MCF 10A (cell line): ENCODE measurements at regions of chr4 and their contacts with region 1.

Region 1: DNA sequence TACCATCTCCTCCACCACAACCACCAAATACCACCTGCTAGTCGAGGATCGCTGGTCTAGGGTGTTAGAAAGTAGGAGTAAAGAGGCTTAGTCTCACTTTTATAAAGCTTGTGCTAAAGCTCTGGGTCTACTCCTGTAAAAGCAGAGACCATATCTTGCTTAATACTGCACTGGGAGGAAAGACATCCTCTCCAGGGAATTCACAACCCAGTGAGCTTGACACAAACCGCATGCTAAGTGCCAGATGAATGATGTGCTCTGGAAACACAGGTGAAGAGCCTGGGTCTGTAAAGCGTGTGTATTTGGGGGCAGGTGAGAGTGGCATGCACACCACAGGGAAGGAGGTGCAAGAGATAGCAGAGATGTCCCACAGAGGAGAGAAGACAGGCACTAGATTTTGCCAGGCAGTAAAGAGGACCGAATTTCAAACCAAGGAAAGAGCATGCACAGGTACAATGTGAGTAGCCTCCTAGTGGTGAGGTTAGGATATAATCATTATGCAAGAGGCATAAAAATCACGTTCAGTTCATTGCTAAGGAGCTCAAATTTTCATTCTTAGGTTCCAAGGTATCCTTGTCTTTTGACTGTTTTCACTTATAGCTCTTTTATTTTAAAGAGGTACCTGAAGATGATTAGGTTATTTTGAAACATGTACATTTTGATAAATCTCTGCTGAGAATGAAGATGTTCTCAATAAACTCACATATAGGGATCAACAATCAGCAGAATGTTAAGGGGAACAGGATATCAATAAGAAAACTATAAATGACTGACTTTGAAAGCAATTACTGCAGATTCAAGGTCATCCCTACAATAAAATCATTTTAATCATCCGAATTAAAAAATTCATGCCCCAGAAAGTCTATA is 20.7 kb downstream of the TAPT1 start:
- DNase-seq: peak; percentile 37
- H3K4me3 Mint-ChIP-seq: no peak overlapping the region
- H3K27ac Mint-ChIP-seq: no peak overlapping the region
- H3K4me1 Mint-ChIP-seq: peaks cover 6% of the 10 kb centered on the region
- H3K27me3 Mint-ChIP-seq: no peaks in the 10 kb centered on the region
- CTCF ChIP-seq: peak; percentile 49

Region 2: DNA sequence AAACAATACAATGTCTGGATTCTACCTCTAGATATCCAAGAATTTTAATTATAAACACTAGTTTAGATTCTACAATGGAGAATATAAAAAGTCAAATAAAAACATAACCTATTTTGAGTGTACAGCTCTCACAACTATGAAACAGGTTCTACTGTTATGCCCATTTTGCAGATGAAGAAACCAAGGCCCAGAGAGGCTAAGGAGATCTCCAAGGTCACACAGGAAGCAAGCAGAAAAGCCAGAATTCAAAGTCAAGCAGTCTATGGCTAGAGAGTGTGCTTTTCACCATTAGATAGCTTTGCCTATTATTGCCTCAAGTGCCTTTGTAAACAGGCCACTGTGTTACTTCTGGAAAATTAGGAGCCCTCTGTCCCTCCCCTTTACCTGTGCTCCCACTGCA is 13.4 kb after region 1 on chr4:
- CTCF ChIA-PET with region 1: interaction called, 12 read pairs
- POLR2A ChIA-PET with region 1: interaction called, 4 read pairs
- intact Hi-C with region 1: no loop called
- DNase-seq: no peak
- H3K4me3 Mint-ChIP-seq: no peak overlapping the region
- H3K27ac Mint-ChIP-seq: peak overlapping the region; percentile 40
- H3K4me1 Mint-ChIP-seq: peaks cover 36% of the 10 kb centered on the region
- H3K27me3 Mint-ChIP-seq: no peaks in the 10 kb centered on the region
- CTCF ChIP-seq: no peak